HepG2 (cell line): ENCODE measurements at regions of chr16 and their contacts with region 1.

Region 1: DNA sequence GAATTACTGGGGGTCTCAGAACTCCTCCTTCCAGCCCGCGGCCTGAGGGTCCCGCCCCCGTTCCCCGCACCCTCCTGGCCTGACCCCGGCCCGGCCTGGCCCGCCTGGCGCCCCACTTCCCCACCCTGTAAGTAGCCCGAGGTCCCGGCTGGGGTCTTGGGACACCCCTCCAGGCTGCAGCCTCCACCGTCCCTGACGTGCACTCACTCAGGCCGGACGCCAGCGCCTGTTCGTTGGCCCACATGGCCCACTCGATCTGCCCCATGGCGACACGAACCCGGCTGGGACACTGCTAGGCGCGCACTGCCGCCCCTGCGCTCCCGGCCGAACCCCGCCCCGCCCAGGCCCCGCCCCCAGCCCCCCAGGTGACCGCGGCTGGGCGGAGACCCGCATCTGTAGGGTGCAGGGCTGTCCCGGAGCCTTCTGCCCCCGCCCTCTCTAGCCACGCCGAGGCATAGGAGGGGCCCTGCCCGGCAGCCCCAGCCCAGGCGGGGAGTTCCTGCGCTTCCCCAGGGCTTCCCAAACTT is at the start of gene CYBA:
- DNase-seq: peak; percentile 83
- ATAC-seq: peak; percentile 76
- H3K4me3 ChIP-seq: peak within 1 kb of the TSS; percentile 66 to 100 (median 94)
- H3K27ac ChIP-seq: peak within 1 kb of the TSS; percentile 88
- H3K4me1 ChIP-seq: peaks cover 27% of the 10 kb centered on the region
- H3K27me3 ChIP-seq: no peaks in the 10 kb centered on the region
- CTCF ChIP-seq: no peak
- EP300 ChIP-seq: no peak
- POLR2A ChIP-seq: peak in 1 of 2 experiments; percentile 74; a peak in 2 of 4 replicates
- RAD21 ChIP-seq: no peak; the same call in 1 of the 2 replicates
- total RNA-seq, gene CYBA: 84.2 and 250 TPM in 2 replicates

Region 2: GRCh38 chr16:88599092-88599733 is 51.6 kb before region 1 on chr16:
- CTCF ChIA-PET with region 1: no interaction called
- POLR2A ChIA-PET with region 1: interaction called, 3 read pairs
- in situ Hi-C with region 1: no loop called
- intact Hi-C with region 1: loop called (anchors 5 kb)
- DNase-seq: no peak
- ATAC-seq: no peak
- H3K4me3 ChIP-seq: no peak overlapping the region
- H3K27ac ChIP-seq: no peak overlapping the region
- H3K4me1 ChIP-seq: peaks cover 43% of the 10 kb centered on the region
- H3K27me3 ChIP-seq: no peaks in the 10 kb centered on the region
- CTCF ChIP-seq: no peak
- EP300 ChIP-seq: no peak
- POLR2A ChIP-seq: no peak
- RAD21 ChIP-seq: no peak

Region 3: GRCh38 chr16:88619859-88620815 is 30.7 kb before region 1 on chr16:
- CTCF ChIA-PET with region 1: no interaction called
- POLR2A ChIA-PET with region 1: interaction called, 17 read pairs
- in situ Hi-C with region 1: no loop called
- intact Hi-C with region 1: loop called (anchors 1 kb)
- DNase-seq: no peak
- ATAC-seq: no peak
- H3K4me3 ChIP-seq: no peak overlapping the region
- H3K27ac ChIP-seq: peak overlapping the region; percentile 65
- H3K4me1 ChIP-seq: peaks cover 36% of the 10 kb centered on the region
- H3K27me3 ChIP-seq: no peaks in the 10 kb centered on the region
- CTCF ChIP-seq: no peak
- EP300 ChIP-seq: no peak
- POLR2A ChIP-seq: no peak
- RAD21 ChIP-seq: no peak

Region 4: GRCh38 chr16:88662843-88663606 is 12.2 kb after region 1 on chr16 and contains the start of gene MVD:
- CTCF ChIA-PET with region 1: no interaction called
- POLR2A ChIA-PET with region 1: interaction called, 51 read pairs
- in situ Hi-C with region 1: no loop called
- intact Hi-C with region 1: no loop called
- DNase-seq: peak; percentile 98
- ATAC-seq: peak; percentile 97
- H3K4me3 ChIP-seq: peak within 1 kb of the TSS; percentile 81 to 95 (median 91)
- H3K27ac ChIP-seq: peak within 1 kb of the TSS; percentile 78
- H3K4me1 ChIP-seq: peaks cover 44% of the 10 kb centered on the region
- H3K27me3 ChIP-seq: no peaks in the 10 kb centered on the region
- CTCF ChIP-seq: peak; percentile 58
- EP300 ChIP-seq: no peak; a peak in 1 of 4 replicates
- POLR2A ChIP-seq: peak; percentile 97 to 98
- RAD21 ChIP-seq: peak; percentile 56
- total RNA-seq, gene MVD: 128 and 187 TPM in 2 replicates

Region 5: DNA sequence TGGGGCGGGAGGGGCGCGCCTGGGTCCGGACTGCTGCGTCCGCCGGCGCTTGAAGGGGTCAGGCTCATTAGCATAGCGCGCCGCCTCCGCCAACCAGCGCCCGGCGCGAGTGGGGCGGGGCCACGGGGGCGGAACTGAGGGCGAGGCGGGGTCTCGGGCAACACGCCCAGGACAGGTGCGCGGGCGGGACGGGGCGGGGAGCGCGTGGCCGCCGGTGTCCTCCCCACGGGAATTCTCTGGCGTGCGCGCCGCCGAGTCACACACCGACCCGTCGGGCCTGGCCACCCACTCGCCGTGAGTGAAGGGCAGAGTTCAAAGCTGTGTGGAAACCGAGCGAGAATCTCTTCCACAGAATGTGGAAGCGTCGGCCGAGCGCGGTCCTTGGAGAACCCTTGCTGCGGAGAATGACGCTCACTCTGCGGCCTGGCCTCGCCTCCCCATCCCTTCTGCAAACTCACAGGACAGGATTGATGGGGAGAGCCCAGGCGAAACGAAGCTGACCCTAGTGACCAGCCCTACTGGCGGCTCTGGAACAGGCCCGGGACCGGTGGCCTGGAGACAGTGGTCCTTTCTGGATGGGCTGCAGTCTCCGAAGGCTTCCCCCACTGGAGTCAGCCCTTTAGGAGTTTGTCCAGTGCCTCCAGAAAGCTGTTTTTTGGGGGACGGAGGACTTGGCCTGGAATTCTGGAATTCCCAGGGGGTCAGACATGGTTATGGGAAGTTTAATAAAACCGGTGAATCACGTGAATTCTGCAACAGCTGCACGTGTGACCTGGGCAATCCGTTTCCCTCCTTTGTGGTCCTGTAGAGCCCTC is 35.8 kb after region 1 on chr16 and contains the start of gene SNAI3:
- CTCF ChIA-PET with region 1: no interaction called
- POLR2A ChIA-PET with region 1: no interaction called
- in situ Hi-C with region 1: no loop called
- intact Hi-C with region 1: loop called (anchors 2 kb)
- DNase-seq: peak; percentile 76
- ATAC-seq: peak; percentile 85
- H3K4me3 ChIP-seq: peak within 1 kb of the TSS; percentile 52 to 76 (median 69)
- H3K27ac ChIP-seq: no peak within 1 kb of the TSS
- H3K4me1 ChIP-seq: peaks cover 48% of the 10 kb centered on the region
- H3K27me3 ChIP-seq: peaks cover 23 to 82% of the 10 kb centered on the region in 2 experiments
- CTCF ChIP-seq: no peak; the same call in 1 of the 2 replicates
- EP300 ChIP-seq: no peak
- POLR2A ChIP-seq: peak in 1 of 2 experiments; percentile 15; a peak in 2 of 4 replicates
- RAD21 ChIP-seq: peak; percentile 17
- total RNA-seq, gene SNAI3: 0.09 and 0.18 TPM in 2 replicates